HEK293 (cell line): ENCODE measurements at regions of chr6 and their contacts with region 1.

Region 1: GRCh38 chr6:75349262-75349984 is 64.8 kb upstream of the TMEM30A start:
- H3K4me3 ChIP-seq: peak overlapping the region; percentile 34
- H3K27ac ChIP-seq: peak overlapping the region; percentile 81
- H3K4me1 ChIP-seq: peaks cover 31% of the 10 kb centered on the region
- CTCF ChIP-seq: peak; percentile 45; the same call in 1 of the 2 replicates

Region 2: GRCh38 chr6:75334266-75335040 is 15.0 kb before region 1 on chr6:
- CTCF ChIA-PET with region 1: interaction called, 7 read pairs
- POLR2A ChIA-PET with region 1: interaction called, 11 read pairs
- H3K4me3 ChIP-seq: peak overlapping the region; percentile 9; the same call in 1 of the 2 replicates
- H3K27ac ChIP-seq: peak overlapping the region; percentile 6; the same call in 1 of the 2 replicates
- H3K4me1 ChIP-seq: peaks cover 15% of the 10 kb centered on the region
- CTCF ChIP-seq: no peak

Region 3: GRCh38 chr6:75608956-75609533 is 259.6 kb after region 1 on chr6:
- CTCF ChIA-PET with region 1: no interaction called
- POLR2A ChIA-PET with region 1: no interaction called
- H3K4me3 ChIP-seq: no peak overlapping the region
- H3K27ac ChIP-seq: no peak overlapping the region
- H3K4me1 ChIP-seq: peaks cover 36% of the 10 kb centered on the region
- CTCF ChIP-seq: no peak